ENCODE measurements at regions of chr7 and their contacts with region 1.

Region 1: DNA sequence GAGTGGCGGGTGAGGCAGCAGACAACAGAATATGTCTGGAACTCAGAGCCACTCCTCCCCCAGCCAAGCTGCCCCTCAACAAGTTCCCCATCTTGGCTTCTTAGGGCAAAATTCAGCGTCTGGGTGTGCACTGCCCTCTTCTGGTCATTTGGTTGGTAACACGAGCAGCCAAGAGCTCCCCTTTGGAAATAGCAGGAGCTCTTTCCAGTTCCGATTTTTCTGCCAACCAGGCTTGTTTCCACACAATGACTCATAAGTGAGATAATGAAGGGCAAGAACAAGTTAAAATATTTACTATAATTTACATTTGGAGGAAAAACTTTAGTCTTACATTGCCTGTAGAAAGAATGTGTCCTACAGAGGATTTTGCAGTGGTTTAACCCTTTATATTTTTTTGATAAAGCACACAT is 70.5 kb downstream of the ADCYAP1R1 start:
- DNase-seq: peak; percentile 40 to 53
- ATAC-seq: peak; percentile 64

Region 2: DNA sequence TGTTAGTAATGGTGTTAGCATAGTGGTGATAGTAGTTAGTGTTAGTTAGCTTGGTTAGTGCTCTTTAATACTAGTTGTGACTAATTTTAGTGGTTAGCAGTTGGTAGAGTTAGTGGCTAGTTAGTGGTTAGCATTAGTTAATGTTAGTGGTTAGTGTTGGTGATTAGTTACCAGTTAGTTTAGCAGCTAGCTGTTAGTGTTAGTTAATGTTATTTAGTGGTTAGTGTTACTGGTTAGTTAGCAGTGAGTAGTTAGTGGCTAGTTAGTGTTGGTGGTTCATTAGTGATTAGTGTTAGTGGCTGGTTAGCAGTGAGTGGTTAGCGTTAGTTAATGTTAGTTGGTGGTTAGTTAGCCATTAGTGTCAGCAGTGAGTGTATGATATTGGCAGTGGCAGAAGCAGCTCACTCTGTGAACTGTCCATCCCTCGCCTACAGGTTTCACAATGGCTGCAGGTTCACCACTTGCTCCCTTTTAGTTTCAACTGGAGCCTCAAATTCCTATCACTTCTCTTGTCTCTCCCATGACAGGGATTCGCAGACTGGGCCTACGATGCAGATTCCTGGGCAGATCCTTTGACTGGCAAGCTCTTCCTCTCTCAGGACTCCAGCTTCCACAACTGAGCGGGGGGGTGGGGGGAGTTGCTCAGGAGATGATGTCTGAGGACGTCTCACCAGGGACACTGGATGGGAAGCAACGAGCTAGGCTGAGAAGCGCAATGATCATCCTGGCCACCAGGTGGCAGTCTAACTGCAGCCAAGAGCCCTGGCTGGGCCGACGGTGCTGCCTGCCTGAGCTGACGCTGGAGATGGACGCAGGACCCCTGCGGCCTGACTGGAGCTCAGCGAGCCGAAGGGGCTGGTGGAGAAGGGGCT is 139.4 kb before region 1 on chr7:
- intact Hi-C with region 1: loop called (anchors 5 to 10 kb)
- DNase-seq: peak; percentile 53 to 83
- ATAC-seq: peak; percentile 84